Heart left ventricle (tissue), 16 donors: ENCODE measurements at regions of chr4 and their contacts with region 1.

Region 1: GRCh38 chr4:23401572-23401971 is 488.3 kb downstream of the PPARGC1A start:
- DNase-seq: no peak
- ATAC-seq: no peak
- H3K4me3 ChIP-seq: no peak overlapping the region
- H3K27ac ChIP-seq: no peak overlapping the region
- H3K4me1 ChIP-seq: no peaks in the 10 kb centered on the region
- H3K27me3 ChIP-seq: no peaks in the 10 kb centered on the region
- CTCF ChIP-seq: no peak
- POLR2A ChIP-seq: no peak

Region 2: GRCh38 chr4:23122666-23123400 is 278.7 kb before region 1 on chr4:
- intact Hi-C with region 1: no loop called
- DNase-seq: no peak
- ATAC-seq: no peak
- H3K4me3 ChIP-seq: no peak overlapping the region
- H3K27ac ChIP-seq: no peak overlapping the region
- H3K4me1 ChIP-seq: no peaks in the 10 kb centered on the region
- H3K27me3 ChIP-seq: no peaks in the 10 kb centered on the region
- CTCF ChIP-seq: no peak
- POLR2A ChIP-seq: no peak

Region 3: GRCh38 chr4:23422878-23423277 is 21.3 kb after region 1 on chr4:
- intact Hi-C with region 1: loop called in 1 of 10 experiments (anchors 2 kb)
- DNase-seq: no peak
- ATAC-seq: no peak
- H3K4me3 ChIP-seq: no peak overlapping the region
- H3K27ac ChIP-seq: no peak overlapping the region
- H3K4me1 ChIP-seq: no peaks in the 10 kb centered on the region
- H3K27me3 ChIP-seq: no peaks in the 10 kb centered on the region
- CTCF ChIP-seq: no peak
- POLR2A ChIP-seq: no peak

Region 4: GRCh38 chr4:23438764-23439163 is 37.2 kb after region 1 on chr4:
- intact Hi-C with region 1: loop called in 1 of 10 experiments (anchors 5 kb)
- DNase-seq: no peak
- ATAC-seq: no peak
- H3K4me3 ChIP-seq: no peak overlapping the region
- H3K27ac ChIP-seq: no peak overlapping the region
- H3K4me1 ChIP-seq: no peaks in the 10 kb centered on the region
- H3K27me3 ChIP-seq: no peaks in the 10 kb centered on the region
- CTCF ChIP-seq: no peak
- POLR2A ChIP-seq: no peak